Activated B cell treated with CpG ODN at 0.5 μM for 24 hours (primary cell): ENCODE measurements at regions of chr14 and their contacts with region 1.

Region 1: DNA sequence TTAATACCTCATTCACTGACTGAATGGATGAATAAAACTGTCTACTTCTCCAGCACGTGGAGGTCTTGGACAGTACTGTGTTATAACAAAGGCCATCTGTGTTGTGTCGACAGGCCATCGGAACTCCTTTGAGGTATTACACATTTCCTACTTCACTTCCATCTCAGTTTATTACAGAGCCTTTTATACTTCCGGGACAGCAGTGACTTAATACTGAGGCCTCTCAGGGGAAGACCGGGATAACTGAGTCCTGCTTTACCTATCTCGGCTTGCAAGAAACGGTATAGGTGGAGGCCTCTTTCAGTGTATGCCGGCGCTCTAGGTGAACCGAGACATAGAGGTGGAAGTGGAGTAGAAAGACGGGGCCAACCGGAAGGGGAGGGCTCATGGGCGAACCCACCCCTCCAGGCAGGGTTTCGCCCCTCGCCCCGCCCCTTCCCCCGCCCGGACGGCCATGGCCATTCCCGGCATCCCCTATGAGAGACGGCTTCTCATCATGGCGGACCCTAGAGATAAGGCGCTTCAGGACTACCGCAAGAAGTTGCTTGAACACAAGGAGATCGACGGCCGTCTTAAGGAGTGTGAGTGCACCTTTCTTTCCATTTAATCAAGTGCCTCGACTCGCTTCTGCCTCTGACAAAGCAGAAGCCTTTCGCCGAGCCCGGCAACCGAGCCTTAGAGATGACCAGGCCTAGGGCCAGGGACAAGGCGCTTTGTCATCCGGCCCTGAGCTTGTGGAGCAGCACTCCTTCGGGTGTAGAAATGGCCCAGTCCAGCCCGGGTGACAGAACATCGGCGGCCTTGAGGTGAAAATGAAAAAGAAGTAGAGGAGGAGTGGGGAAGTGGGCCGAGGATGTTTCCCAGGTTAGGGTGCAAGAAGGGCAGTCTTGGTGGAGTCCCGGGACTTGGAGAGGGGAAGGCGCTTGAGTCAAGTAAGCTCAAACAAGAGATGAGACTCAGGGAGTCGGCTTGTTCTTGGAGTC is at the start of gene PSMC6:
- DNase-seq: peak; percentile 85
- ATAC-seq: peak; percentile 99
- H3K4me3 Mint-ChIP-seq: peak within 1 kb of the TSS; percentile 99
- H3K27ac Mint-ChIP-seq: peak within 1 kb of the TSS; percentile 98
- H3K4me1 Mint-ChIP-seq: peaks cover 25% of the 10 kb centered on the region
- H3K27me3 Mint-ChIP-seq: peaks cover 2% of the 10 kb centered on the region
- CTCF ChIP-seq: no peak
- total RNA-seq, gene PSMC6: 94.8 and 97.6 TPM in 2 replicates

Region 2: DNA sequence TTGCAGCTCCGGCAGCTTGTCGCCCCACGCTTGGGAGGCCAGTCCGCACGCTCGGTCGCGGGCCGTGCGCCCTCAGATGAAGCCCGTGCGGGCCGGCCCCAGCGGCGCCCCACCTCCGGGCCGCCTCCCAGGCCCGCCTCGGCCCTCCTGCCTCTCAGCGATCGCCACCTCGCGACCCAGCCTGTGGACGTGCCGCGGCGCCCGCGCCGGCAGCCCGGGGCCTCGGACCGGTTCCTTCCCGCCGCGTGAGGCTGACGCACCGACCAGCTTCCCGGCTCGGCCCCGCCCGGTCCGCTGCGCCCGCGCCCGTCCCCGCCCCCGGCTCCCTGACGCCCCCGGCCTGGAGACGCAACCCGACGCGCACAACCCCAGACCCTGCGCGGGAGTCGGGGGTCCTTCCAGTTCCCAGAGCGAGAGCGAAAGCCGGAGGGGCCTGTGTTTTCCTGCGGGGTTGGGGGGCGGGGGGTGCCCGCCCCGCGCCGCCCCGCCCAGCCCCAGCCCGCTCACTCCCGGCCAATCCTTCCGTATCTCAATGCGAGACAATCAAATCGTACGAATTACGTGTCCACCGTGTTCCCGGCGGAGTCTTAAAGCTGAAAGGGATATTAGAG is 11.4 kb before region 1 on chr14 and contains the start of gene ERO1A:
- CTCF ChIA-PET with region 1: no interaction called
- POLR2A ChIA-PET with region 1: interaction called, 6 read pairs
- intact Hi-C with region 1: loop called (anchors 1 kb)
- DNase-seq: peak; percentile 73
- ATAC-seq: peak; percentile 75
- H3K4me3 Mint-ChIP-seq: peak within 1 kb of the TSS; percentile 99
- H3K27ac Mint-ChIP-seq: peak within 1 kb of the TSS; percentile 94
- H3K4me1 Mint-ChIP-seq: peaks cover 30% of the 10 kb centered on the region
- H3K27me3 Mint-ChIP-seq: no peaks in the 10 kb centered on the region
- CTCF ChIP-seq: no peak
- total RNA-seq, gene ERO1A: 30.8 and 31.5 TPM in 2 replicates

Region 3: GRCh38 chr14:52729925-52730667 is 23.1 kb after region 1 on chr14 and contains the start of gene STYX:
- CTCF ChIA-PET with region 1: interaction called, 3 read pairs
- POLR2A ChIA-PET with region 1: interaction called, 7 read pairs
- intact Hi-C with region 1: loop called (anchors 1 kb)
- DNase-seq: peak; percentile 95
- ATAC-seq: peak; percentile 96
- H3K4me3 Mint-ChIP-seq: peak within 1 kb of the TSS; percentile 94
- H3K27ac Mint-ChIP-seq: peak within 1 kb of the TSS; percentile 89
- H3K4me1 Mint-ChIP-seq: peaks cover 46% of the 10 kb centered on the region
- H3K27me3 Mint-ChIP-seq: no peaks in the 10 kb centered on the region
- CTCF ChIP-seq: no peak
- total RNA-seq, gene STYX: 13.1 and 13.5 TPM in 2 replicates

Region 4: DNA sequence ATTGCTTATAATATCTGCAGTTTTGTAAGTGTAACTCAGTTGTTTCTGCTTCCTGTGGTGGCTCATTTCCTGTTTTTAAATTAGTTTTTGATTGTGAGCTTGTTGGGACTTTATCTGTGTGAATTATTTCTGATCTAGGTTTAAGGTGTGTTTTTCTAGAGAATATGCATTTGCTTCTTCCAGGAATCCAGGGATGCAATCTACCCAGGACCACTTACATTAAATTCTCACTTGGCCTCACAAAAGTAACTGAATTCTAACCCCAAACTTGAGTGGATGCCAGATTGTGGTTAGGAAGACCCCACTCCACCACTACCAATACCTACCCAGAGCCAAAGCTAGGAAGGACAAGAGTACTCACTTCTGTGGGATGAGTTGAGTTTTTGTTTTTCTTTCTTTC is 34.9 kb after region 1 on chr14:
- CTCF ChIA-PET with region 1: no interaction called
- POLR2A ChIA-PET with region 1: interaction called, 4 read pairs
- intact Hi-C with region 1: loop called (anchors 5 kb)
- DNase-seq: no peak
- ATAC-seq: peak; percentile 10
- H3K4me3 Mint-ChIP-seq: peak overlapping the region; percentile 73
- H3K27ac Mint-ChIP-seq: peak overlapping the region; percentile 87
- H3K4me1 Mint-ChIP-seq: peaks cover 42% of the 10 kb centered on the region
- H3K27me3 Mint-ChIP-seq: no peaks in the 10 kb centered on the region
- CTCF ChIP-seq: no peak

Region 5: GRCh38 chr14:52769887-52770286 is 62.9 kb after region 1 on chr14:
- CTCF ChIA-PET with region 1: no interaction called
- POLR2A ChIA-PET with region 1: interaction called, 12 read pairs
- intact Hi-C with region 1: no loop called
- DNase-seq: no peak
- ATAC-seq: no peak
- H3K4me3 Mint-ChIP-seq: no peak overlapping the region
- H3K27ac Mint-ChIP-seq: no peak overlapping the region
- H3K4me1 Mint-ChIP-seq: peaks cover 2% of the 10 kb centered on the region
- H3K27me3 Mint-ChIP-seq: no peaks in the 10 kb centered on the region
- CTCF ChIP-seq: no peak

Region 6: GRCh38 chr14:54396493-54397335 is 1689.7 kb after region 1 on chr14 and contains the start of gene CDKN3:
- CTCF ChIA-PET with region 1: no interaction called
- POLR2A ChIA-PET with region 1: no interaction called
- intact Hi-C with region 1: loop called (anchors 1 kb)
- DNase-seq: peak; percentile 94
- ATAC-seq: peak; percentile 94
- H3K4me3 Mint-ChIP-seq: peak within 1 kb of the TSS; percentile 86
- H3K27ac Mint-ChIP-seq: peak within 1 kb of the TSS; percentile 82
- H3K4me1 Mint-ChIP-seq: peaks cover 23% of the 10 kb centered on the region
- H3K27me3 Mint-ChIP-seq: no peaks in the 10 kb centered on the region
- CTCF ChIP-seq: no peak
- total RNA-seq, gene CDKN3: 0.91 and 1.6 TPM in 2 replicates